Vagina (tissue), 2 donors: ENCODE measurements at regions of chr16 and their contacts with region 1.

Region 1: GRCh38 chr16:81737885-81738786 is 41.0 kb upstream of the PLCG2 start:
- DNase-seq: no peak
- H3K4me3 ChIP-seq: peak overlapping the region in 1 of 2 donors; percentile 25
- H3K27ac ChIP-seq: peak overlapping the region; percentile 74
- H3K4me1 ChIP-seq: peaks cover 12% of the 10 kb centered on the region
- H3K27me3 ChIP-seq: no peaks in the 10 kb centered on the region
- CTCF ChIP-seq: peak; percentile 73 to 93 (median 91)
- POLR2A ChIP-seq: no peak

Region 2: DNA sequence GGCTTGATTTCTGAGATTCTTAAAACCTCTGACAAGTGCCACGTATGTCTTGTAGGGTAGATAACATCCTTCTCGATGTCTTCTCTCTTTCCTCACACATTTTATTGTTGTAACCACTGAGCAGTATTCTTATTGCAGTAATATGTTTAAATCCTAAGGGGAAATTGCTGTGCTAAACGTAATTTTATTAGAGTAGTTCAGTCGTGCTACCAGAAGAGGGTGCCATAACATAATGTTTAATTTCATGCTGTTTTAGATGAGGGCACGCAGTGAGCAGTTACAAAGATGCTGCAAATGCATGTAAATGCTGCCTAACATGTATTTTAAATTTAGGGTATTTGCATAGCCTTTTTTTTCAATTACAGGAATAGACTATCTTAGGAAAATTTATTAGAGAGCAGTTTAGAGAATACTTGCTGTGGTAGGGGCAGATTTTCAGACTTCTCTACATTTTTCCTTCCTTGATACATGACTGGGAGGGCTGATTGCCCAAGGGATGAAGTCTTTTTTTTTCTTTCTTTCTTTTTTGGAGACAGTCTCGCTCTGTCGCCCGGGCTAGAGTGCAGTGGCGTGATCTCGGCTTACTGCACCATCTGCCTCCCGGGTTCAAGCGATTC is 371.7 kb before region 1 on chr16:
- intact Hi-C with region 1: loop called (anchors 10 kb)
- DNase-seq: no peak
- H3K4me3 ChIP-seq: no peak overlapping the region
- H3K27ac ChIP-seq: no peak overlapping the region
- H3K4me1 ChIP-seq: no peaks in the 10 kb centered on the region
- H3K27me3 ChIP-seq: no peaks in the 10 kb centered on the region
- CTCF ChIP-seq: peak; percentile 58 to 71 (median 69)
- POLR2A ChIP-seq: no peak

Region 3: DNA sequence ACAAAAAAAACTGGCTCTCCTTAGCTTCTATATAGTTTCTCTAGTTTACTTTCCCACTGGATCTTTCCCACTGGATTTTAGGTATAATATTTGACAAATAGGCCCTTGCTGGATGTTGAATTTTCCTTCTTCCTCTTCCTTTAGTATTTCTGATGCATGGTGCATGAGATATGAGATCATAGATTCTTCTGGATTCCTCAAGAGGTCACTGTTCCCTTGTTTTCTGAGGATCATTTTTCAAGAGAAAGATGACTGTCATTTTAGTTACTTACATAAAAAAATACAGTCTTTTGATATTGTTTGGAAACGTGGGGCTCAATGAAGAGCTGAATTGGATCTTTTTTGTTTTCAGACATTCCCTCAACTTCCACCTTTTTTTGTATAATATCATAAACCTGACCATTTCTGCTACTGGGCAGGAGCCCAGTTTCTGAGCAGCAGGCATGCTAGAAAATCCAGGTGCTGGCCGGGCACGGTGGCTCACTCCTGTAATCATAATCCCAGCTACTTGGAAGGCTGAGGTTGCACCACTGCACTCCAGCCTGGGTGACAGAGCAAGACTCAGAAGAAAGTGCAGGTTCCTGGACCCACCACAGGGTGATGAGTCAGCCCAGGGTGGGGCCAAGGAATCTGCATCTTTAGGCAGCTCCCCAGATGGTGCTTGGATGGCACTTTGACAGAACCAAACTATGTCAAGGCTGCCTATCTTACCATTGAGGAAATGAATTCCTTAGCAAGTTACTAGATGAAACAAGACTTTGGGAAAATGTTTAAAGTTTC is 202.8 kb after region 1 on chr16:
- intact Hi-C with region 1: no loop called
- DNase-seq: peak in 1 of 2 donors; percentile 43
- H3K4me3 ChIP-seq: no peak overlapping the region
- H3K27ac ChIP-seq: no peak overlapping the region
- H3K4me1 ChIP-seq: no peaks in the 10 kb centered on the region
- H3K27me3 ChIP-seq: no peaks in the 10 kb centered on the region
- CTCF ChIP-seq: peak in 1 of 3 experiments; percentile 9
- POLR2A ChIP-seq: no peak

Region 4: DNA sequence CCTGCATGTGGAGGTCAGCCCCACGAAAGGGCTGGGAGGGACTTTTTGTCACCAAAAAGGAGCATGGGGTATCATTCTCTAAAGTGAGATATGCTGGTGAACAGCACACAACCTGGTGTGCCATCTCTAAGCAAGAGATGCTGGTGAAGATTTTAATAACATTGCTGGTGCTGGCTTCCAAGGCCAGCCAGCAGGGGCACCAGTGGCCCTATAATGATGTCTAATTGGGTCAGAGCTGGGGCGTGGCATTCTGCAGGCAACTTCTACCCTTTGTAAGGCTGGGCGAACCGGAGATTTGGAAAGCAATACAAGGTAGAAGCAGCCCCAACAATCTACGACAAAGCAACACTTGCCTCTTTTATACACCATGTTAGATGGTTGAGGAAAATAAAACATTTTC is 256.3 kb after region 1 on chr16:
- intact Hi-C with region 1: no loop called
- DNase-seq: no peak
- H3K4me3 ChIP-seq: no peak overlapping the region
- H3K27ac ChIP-seq: no peak overlapping the region
- H3K4me1 ChIP-seq: peaks cover 17% of the 10 kb centered on the region
- H3K27me3 ChIP-seq: no peaks in the 10 kb centered on the region
- CTCF ChIP-seq: no peak
- POLR2A ChIP-seq: no peak